T-cell (primary cell): ENCODE measurements at regions of chr9 and their contacts with region 1.

Region 1: GRCh38 chr9:6328103-6328502 is at the start of gene TPD52L3:
- DNase-seq: no peak
- ATAC-seq: no peak
- H3K4me3 ChIP-seq: no peak within 1 kb of the TSS
- H3K4me3 Mint-ChIP-seq: no peak within 1 kb of the TSS
- H3K27ac ChIP-seq: no peak within 1 kb of the TSS
- H3K27ac Mint-ChIP-seq: no peak within 1 kb of the TSS
- H3K4me1 ChIP-seq: no peaks in the 10 kb centered on the region
- H3K4me1 Mint-ChIP-seq: no peaks in the 10 kb centered on the region
- H3K27me3 ChIP-seq: peaks cover 0 to 4% of the 10 kb centered on the region in 2 experiments
- H3K27me3 Mint-ChIP-seq: peaks cover 17 to 43% of the 10 kb centered on the region in 2 donors
- total RNA-seq, gene TPD52L3: not detected

Region 2: DNA sequence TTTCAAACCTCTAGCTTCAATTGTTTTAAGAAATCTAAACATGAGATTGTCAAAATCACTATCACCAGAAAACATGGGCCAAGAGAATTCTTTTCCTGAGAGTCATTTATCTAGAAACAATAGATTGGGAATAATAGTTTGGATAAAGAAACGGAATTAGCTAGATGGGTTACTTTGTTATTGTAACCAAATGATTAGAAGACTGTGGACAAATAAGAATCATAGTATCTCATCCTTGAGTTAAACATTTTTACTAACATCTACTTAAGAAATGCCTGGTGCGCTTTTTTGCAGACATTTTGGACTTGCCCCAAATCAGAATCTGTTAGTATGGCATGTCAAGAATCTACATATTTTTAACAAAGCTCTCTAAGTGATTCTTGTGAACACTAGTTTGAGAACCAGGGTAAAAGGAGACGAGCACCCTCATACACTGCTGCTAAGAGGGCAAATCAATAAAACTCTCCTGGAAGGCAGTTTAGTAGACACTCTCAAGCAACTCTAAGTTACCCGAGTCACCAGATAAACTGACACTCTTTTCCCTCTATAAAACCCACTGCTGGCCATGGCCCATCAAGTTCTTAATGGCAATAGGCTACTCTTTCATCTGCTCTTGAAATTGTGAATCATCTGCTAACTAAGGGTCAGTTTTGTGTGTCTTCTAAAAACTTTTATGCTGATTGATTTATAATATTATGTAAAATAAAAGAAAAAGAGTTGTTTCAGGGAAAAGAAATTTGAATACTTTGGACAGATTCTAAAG is 39.2 kb after region 1 on chr9:
- CTCF ChIA-PET with region 1: no interaction called
- POLR2A ChIA-PET with region 1: no interaction called
- DNase-seq: no peak
- ATAC-seq: no peak
- H3K4me3 ChIP-seq: no peak overlapping the region
- H3K4me3 Mint-ChIP-seq: no peak overlapping the region
- H3K27ac ChIP-seq: no peak overlapping the region
- H3K27ac Mint-ChIP-seq: no peak overlapping the region
- H3K4me1 ChIP-seq: no peaks in the 10 kb centered on the region
- H3K4me1 Mint-ChIP-seq: no peaks in the 10 kb centered on the region
- H3K27me3 ChIP-seq: peaks cover 0 to 5% of the 10 kb centered on the region in 2 experiments
- H3K27me3 Mint-ChIP-seq: peaks cover 0 to 3% of the 10 kb centered on the region in 2 donors

Region 3: DNA sequence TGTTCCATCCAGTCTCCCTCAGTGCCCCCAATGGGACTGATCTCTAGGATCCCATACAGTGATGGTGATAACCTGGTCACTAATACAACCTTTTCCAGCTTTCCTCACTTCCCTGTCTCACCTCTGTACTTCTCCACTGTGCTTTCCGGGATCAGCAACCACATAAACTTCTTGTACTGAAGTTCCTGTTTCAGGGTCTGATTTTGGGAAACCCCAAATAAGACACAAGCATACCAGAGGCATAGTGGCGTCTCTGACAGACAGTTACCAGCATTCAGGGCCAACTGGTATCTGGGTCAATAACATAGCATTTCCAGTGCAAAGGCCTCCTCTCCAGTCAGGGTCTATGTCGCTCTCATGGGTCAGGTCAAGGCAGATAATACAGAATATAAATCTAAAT is 253.2 kb after region 1 on chr9:
- CTCF ChIA-PET with region 1: no interaction called
- POLR2A ChIA-PET with region 1: interaction called in 1 of 2 experiments, 13 read pairs
- DNase-seq: no peak
- ATAC-seq: no peak
- H3K4me3 ChIP-seq: no peak overlapping the region
- H3K4me3 Mint-ChIP-seq: no peak overlapping the region
- H3K27ac ChIP-seq: no peak overlapping the region
- H3K27ac Mint-ChIP-seq: no peak overlapping the region
- H3K4me1 ChIP-seq: no peaks in the 10 kb centered on the region
- H3K4me1 Mint-ChIP-seq: no peaks in the 10 kb centered on the region
- H3K27me3 ChIP-seq: peaks cover 0 to 12% of the 10 kb centered on the region in 2 experiments
- H3K27me3 Mint-ChIP-seq: peaks cover 3 to 12% of the 10 kb centered on the region in 2 donors